Pancreas (tissue), 10 donors: ENCODE measurements at regions of chr11 and their contacts with region 1.

Region 1: DNA sequence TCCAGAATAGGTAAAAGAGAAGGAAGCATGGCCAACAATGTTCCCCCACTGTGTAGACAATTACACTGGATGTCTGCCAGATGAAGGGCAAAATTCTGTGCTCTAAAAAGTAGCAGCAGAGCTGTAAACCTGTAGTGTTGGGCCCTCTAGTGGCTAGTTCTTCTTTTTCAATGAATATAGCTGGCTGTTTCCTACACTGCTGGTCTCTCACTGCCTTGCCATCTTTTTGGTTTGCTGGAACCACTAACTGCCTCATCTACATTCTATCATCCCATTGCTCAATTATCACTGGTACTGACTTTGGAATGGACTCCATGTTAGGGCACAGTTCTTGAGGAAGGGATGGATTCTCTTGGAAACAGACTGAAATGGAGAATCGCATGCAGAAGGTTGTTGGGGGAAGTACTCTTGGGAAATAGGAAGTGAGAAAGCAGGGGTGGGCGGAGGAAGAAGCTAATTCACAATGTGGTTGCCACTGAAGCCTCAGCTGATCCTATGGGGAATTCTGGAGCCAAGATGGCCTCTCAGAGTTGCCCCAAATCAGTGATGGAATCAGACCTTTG is 17.9 kb downstream of the KCNE3 start:
- DNase-seq: peak in 3 of 6 donors; percentile 46 to 67 (median 57)
- ATAC-seq: peak; percentile 67 to 87 (median 77)
- H3K4me3 ChIP-seq: no peak overlapping the region
- H3K27ac ChIP-seq: no peak overlapping the region
- H3K4me1 ChIP-seq: peaks cover 3 to 8% (median 5%) of the 10 kb centered on the region in 3 donors
- H3K27me3 ChIP-seq: no peaks in the 10 kb centered on the region
- CTCF ChIP-seq: peak; percentile 31 to 56 (median 48)

Region 2: DNA sequence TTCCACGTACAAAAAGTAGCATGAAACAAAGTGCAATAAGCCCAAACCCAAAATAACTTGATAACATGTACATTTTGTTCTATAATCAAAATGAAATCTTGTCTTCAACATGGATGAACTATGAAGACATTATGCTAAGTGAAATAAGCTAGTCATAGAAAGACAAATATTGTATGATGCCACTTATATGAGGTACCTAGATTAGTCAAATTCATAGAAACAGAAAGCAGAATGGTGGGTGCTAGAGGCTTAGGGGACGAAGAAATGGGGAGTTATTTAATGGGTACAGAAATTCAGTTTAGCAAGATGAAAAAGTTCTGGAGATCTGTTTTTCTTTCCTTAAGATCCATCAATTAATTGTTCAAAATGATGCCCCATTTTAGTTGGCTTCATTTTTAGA is 58.8 kb before region 1 on chr11:
- intact Hi-C with region 1: loop called in 2 of 3 experiments (anchors 5 kb)
- DNase-seq: no peak
- ATAC-seq: no peak
- H3K4me3 ChIP-seq: no peak overlapping the region
- H3K27ac ChIP-seq: no peak overlapping the region
- H3K4me1 ChIP-seq: peaks cover 0 to 2% (median 0%) of the 10 kb centered on the region in 3 donors
- H3K27me3 ChIP-seq: no peaks in the 10 kb centered on the region
- CTCF ChIP-seq: no peak

Region 3: GRCh38 chr11:74519710-74520109 is 70.3 kb after region 1 on chr11:
- intact Hi-C with region 1: no loop called
- DNase-seq: no peak
- ATAC-seq: no peak
- H3K4me3 ChIP-seq: no peak overlapping the region
- H3K27ac ChIP-seq: no peak overlapping the region
- H3K4me1 ChIP-seq: no peaks in the 10 kb centered on the region
- H3K27me3 ChIP-seq: no peaks in the 10 kb centered on the region
- CTCF ChIP-seq: no peak

Region 4: DNA sequence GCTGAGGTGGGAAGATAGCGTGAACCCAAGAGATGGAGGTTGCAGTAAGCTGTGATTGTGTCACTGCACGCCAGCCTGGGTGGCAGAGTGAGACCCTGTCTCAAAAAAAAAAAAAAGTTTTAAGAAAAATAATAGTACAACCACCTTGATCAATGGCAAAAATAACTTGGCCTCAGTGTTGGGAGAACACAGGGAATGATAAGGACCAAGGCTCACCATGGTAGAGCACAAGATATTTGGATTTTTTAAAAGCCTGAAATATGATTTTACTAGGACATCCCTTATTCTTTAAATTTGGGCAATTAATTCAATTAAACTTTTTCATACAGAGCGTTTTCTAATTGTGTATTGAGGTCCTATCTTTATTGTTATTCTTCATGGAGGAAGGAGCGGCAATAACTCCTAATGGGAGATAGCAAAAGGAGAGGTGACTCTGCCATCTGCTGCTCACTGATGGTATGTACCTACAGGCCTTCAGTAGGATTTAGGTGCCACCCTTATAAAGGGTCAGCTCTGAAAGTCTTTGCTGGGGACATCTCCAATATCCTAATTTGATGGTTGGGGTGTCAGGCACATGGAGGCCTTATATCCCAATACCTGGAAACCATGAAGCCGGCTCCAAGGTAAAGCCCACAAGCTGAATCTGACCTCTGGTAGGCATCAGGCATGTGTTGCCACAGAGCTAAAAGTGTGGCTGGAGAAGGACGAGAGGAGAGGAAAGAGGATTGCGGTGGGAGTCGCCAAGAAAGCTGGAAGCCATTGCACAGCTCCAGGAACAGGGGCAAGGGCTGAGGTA is 121.0 kb after region 1 on chr11:
- intact Hi-C with region 1: loop called in 2 of 3 experiments (anchors 2 to 5 kb)
- DNase-seq: peak in 2 of 6 donors; percentile 47 to 64
- ATAC-seq: peak; percentile 86 to 94 (median 92)
- H3K4me3 ChIP-seq: no peak overlapping the region
- H3K27ac ChIP-seq: peak overlapping the region; percentile 33 to 46 (median 38)
- H3K4me1 ChIP-seq: peaks cover 15 to 34% (median 29%) of the 10 kb centered on the region in 3 donors
- H3K27me3 ChIP-seq: no peaks in the 10 kb centered on the region
- CTCF ChIP-seq: peak; percentile 30 to 62 (median 56)